ENCODE measurements at regions of chrX and their contacts with region 1.

Region 1: DNA sequence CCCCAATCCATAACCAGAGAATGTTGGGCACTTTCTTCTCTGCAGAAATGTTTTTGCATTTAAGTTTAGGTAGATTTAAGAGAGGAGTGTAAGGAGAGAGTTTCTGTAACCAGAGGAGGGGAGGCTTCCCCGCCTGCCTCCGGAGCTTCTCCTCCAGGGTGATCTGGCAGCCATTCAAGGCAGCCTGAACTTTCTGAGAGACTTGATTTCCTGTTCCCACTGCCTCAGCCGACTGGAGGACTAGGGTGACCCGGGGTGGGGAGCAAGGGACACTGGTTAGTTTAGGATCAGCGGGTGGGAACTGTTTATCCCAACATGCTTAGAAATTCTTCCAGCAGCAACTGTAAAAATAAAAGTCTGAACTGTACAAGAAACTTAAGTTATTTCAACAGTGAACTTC is 15.1 kb downstream of the FAM9C start:
- DNase-seq: peak in 5 of 9 experiments; percentile 18 to 50 (median 24)
- ATAC-seq: no peak
- H3K4me3 ChIP-seq: peak overlapping the region in 1 of 2 experiments; percentile 5
- H3K4me3 Mint-ChIP-seq: peak overlapping the region; percentile 54
- H3K27ac ChIP-seq: peak overlapping the region; percentile 30 to 56
- H3K27ac Mint-ChIP-seq: peak overlapping the region; percentile 96
- H3K4me1 ChIP-seq: peaks cover 69% of the 10 kb centered on the region
- H3K4me1 Mint-ChIP-seq: peaks cover 73% of the 10 kb centered on the region
- H3K27me3 ChIP-seq: no peaks in the 10 kb centered on the region
- H3K27me3 Mint-ChIP-seq: no peaks in the 10 kb centered on the region
- CTCF ChIP-seq: no peak

Region 2: DNA sequence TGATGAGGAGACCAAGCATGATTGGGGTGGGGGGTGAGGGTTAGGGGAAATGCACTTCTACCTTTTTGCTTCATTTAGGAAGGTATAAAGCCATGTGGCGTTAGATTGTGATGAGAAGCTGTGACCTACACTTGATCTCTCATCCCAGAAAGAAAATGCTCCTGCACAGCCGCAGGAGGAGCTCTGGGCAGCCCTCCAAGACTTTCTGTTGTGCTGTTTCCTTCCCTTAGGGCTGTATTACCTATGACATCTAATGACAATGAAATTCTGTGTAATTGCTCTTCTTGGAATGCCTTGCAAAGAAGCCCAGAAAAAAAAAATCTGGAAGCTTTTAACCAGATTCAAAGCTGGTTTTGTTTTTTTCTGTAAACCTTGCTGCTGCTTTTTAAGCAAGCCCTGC is 224.7 kb before region 1 on chrX:
- CTCF ChIA-PET with region 1: no interaction called
- POLR2A ChIA-PET with region 1: no interaction called
- intact Hi-C with region 1: no loop called
- DNase-seq: no peak
- ATAC-seq: no peak
- H3K4me3 ChIP-seq: no peak overlapping the region
- H3K4me3 Mint-ChIP-seq: no peak overlapping the region
- H3K27ac ChIP-seq: no peak overlapping the region
- H3K27ac Mint-ChIP-seq: no peak overlapping the region
- H3K4me1 ChIP-seq: no peaks in the 10 kb centered on the region
- H3K4me1 Mint-ChIP-seq: peaks cover 9% of the 10 kb centered on the region
- H3K27me3 ChIP-seq: no peaks in the 10 kb centered on the region
- H3K27me3 Mint-ChIP-seq: no peaks in the 10 kb centered on the region
- CTCF ChIP-seq: no peak

Region 3: GRCh38 chrX:12984629-12985319 is 44.6 kb before region 1 on chrX:
- CTCF ChIA-PET with region 1: interaction called, 4 read pairs
- POLR2A ChIA-PET with region 1: interaction called, 6 read pairs
- intact Hi-C with region 1: loop called (anchors 5 kb)
- DNase-seq: peak in 6 of 9 experiments; percentile 50 to 76 (median 60)
- ATAC-seq: peak; percentile 74
- H3K4me3 ChIP-seq: peak overlapping the region in 1 of 2 experiments; percentile 20
- H3K4me3 Mint-ChIP-seq: peak overlapping the region; percentile 78
- H3K27ac ChIP-seq: peak overlapping the region; percentile 62 to 72
- H3K27ac Mint-ChIP-seq: peak overlapping the region; percentile 99
- H3K4me1 ChIP-seq: peaks cover 69% of the 10 kb centered on the region
- H3K4me1 Mint-ChIP-seq: peaks cover 72% of the 10 kb centered on the region
- H3K27me3 ChIP-seq: no peaks in the 10 kb centered on the region
- H3K27me3 Mint-ChIP-seq: no peaks in the 10 kb centered on the region
- CTCF ChIP-seq: no peak

Region 4: GRCh38 chrX:13013363-13014110 is 15.8 kb before region 1 on chrX:
- CTCF ChIA-PET with region 1: interaction called, 4 read pairs
- POLR2A ChIA-PET with region 1: interaction called, 15 read pairs
- intact Hi-C with region 1: loop called in 1 of 2 experiments (anchors 2 kb)
- DNase-seq: peak in 2 of 9 experiments; percentile 30 to 65
- ATAC-seq: peak; percentile 78
- H3K4me3 ChIP-seq: peak overlapping the region; percentile 14 to 18
- H3K4me3 Mint-ChIP-seq: peak overlapping the region; percentile 47
- H3K27ac ChIP-seq: peak overlapping the region; percentile 47 to 84
- H3K27ac Mint-ChIP-seq: peak overlapping the region; percentile 95
- H3K4me1 ChIP-seq: peaks cover 42% of the 10 kb centered on the region
- H3K4me1 Mint-ChIP-seq: peaks cover 57% of the 10 kb centered on the region
- H3K27me3 ChIP-seq: no peaks in the 10 kb centered on the region
- H3K27me3 Mint-ChIP-seq: no peaks in the 10 kb centered on the region
- CTCF ChIP-seq: no peak

Region 5: GRCh38 chrX:13043144-13043543 is 13.8 kb after region 1 on chrX:
- CTCF ChIA-PET with region 1: no interaction called
- POLR2A ChIA-PET with region 1: interaction called, 3 read pairs
- intact Hi-C with region 1: loop called in 1 of 2 experiments (anchors 1 kb)
- DNase-seq: no peak
- ATAC-seq: no peak
- H3K4me3 ChIP-seq: no peak overlapping the region
- H3K4me3 Mint-ChIP-seq: no peak overlapping the region
- H3K27ac ChIP-seq: no peak overlapping the region
- H3K27ac Mint-ChIP-seq: no peak overlapping the region
- H3K4me1 ChIP-seq: peaks cover 32% of the 10 kb centered on the region
- H3K4me1 Mint-ChIP-seq: peaks cover 44% of the 10 kb centered on the region
- H3K27me3 ChIP-seq: no peaks in the 10 kb centered on the region
- H3K27me3 Mint-ChIP-seq: no peaks in the 10 kb centered on the region
- CTCF ChIP-seq: no peak

Region 6: GRCh38 chrX:13074297-13075262 is 45.2 kb after region 1 on chrX:
- CTCF ChIA-PET with region 1: interaction called, 3 read pairs
- POLR2A ChIA-PET with region 1: interaction called, 6 read pairs
- intact Hi-C with region 1: loop called in 1 of 2 experiments (anchors 2 kb)
- DNase-seq: peak in 2 of 9 experiments; percentile 43 to 65
- ATAC-seq: peak; percentile 91
- H3K4me3 ChIP-seq: no peak overlapping the region
- H3K4me3 Mint-ChIP-seq: peak overlapping the region; percentile 1
- H3K27ac ChIP-seq: peak overlapping the region in 1 of 2 experiments; percentile 48
- H3K27ac Mint-ChIP-seq: peak overlapping the region; percentile 93
- H3K4me1 ChIP-seq: peaks cover 63% of the 10 kb centered on the region
- H3K4me1 Mint-ChIP-seq: peaks cover 52% of the 10 kb centered on the region
- H3K27me3 ChIP-seq: no peaks in the 10 kb centered on the region
- H3K27me3 Mint-ChIP-seq: no peaks in the 10 kb centered on the region
- CTCF ChIP-seq: no peak

Region 7: GRCh38 chrX:13081395-13082205 is 52.3 kb after region 1 on chrX:
- CTCF ChIA-PET with region 1: interaction called, 6 read pairs
- POLR2A ChIA-PET with region 1: interaction called, 30 read pairs
- intact Hi-C with region 1: loop called in 1 of 2 experiments (anchors 5 kb)
- DNase-seq: peak in 2 of 9 experiments; percentile 42 to 70
- ATAC-seq: peak; percentile 33
- H3K4me3 ChIP-seq: peak overlapping the region in 1 of 2 experiments; percentile 22
- H3K4me3 Mint-ChIP-seq: peak overlapping the region; percentile 55
- H3K27ac ChIP-seq: peak overlapping the region; percentile 48 to 73
- H3K27ac Mint-ChIP-seq: peak overlapping the region; percentile 96
- H3K4me1 ChIP-seq: peaks cover 93% of the 10 kb centered on the region
- H3K4me1 Mint-ChIP-seq: peaks cover 85% of the 10 kb centered on the region
- H3K27me3 ChIP-seq: no peaks in the 10 kb centered on the region
- H3K27me3 Mint-ChIP-seq: no peaks in the 10 kb centered on the region
- CTCF ChIP-seq: no peak